Dendritic cell treated with granulocyte-macrophage colony-stimulating factor and Interleukin-4, amounts not matched to agents 40 ng/mL and 50 ng/mL, for 4 days (primary cell): ENCODE measurements at regions of chr9 and their contacts with region 1.

Region 1: DNA sequence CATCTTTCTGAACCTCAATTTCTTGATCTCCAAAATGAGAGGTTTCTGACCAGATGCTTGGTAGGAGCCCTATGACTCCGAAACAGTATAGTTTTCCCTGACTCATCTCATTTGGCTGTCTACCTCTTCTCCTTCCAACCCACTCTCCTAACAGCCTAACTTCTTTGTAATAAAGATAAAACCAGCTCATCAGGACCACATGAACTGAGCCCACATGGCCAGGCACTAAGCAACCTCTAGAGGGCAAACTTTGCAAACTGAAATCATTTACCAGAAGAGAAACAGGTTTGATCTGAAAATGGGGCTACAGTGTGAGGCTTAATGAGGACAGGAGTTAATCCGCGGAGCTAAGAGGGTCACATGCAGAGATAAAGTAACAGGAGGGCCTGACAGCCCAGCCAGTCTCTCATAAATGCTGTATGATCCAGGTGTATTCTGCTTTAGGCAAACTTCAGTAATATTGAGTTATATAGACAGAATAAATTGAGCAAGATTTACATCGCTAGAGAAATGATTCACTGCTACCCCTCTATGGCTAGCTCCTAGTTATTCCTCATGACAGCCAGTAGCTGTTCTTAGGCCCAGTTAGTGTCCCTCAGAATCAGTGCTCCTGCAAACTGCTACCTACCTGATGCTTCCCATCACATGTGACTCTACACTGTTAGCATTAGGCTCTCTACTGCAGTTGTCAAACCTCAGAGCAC is 64.6 kb downstream of the ABCA1 start:
- H3K4me3 Mint-ChIP-seq: no peak overlapping the region
- H3K27ac Mint-ChIP-seq: no peak overlapping the region
- H3K4me1 Mint-ChIP-seq: peaks cover 83% of the 10 kb centered on the region
- H3K27me3 Mint-ChIP-seq: no peaks in the 10 kb centered on the region

Region 2: GRCh38 chr9:104968025-104968982 is 105.0 kb after region 1 on chr9:
- intact Hi-C with region 1: loop called (anchors 10 kb)
- H3K4me3 Mint-ChIP-seq: peak overlapping the region; percentile 97
- H3K27ac Mint-ChIP-seq: peak overlapping the region; percentile 85
- H3K4me1 Mint-ChIP-seq: peaks cover 19% of the 10 kb centered on the region
- H3K27me3 Mint-ChIP-seq: peaks cover 6% of the 10 kb centered on the region

Region 3: DNA sequence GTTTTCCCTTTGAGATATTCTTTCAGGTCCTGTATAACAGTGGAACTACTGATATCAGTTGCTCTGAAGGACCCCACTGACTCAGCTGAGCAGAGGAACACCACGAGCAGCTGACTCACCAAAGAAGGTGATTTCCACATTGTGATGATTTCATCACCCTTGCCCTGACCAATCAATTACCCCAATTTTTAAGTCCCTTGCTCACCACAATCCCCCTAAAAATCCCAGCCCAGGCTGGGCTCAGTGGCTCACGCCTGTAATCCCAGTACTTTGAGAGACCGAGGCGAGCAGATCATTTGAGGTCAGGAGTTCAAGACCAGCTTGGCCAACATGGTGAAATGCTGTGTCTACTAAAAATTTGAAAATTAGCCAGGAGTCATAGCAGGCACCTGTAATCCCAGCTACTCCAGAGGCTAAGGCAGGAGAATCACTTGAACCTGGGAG is 189.9 kb after region 1 on chr9:
- intact Hi-C with region 1: loop called (anchors 10 kb)
- H3K4me3 Mint-ChIP-seq: no peak overlapping the region
- H3K27ac Mint-ChIP-seq: peak overlapping the region; percentile 68
- H3K4me1 Mint-ChIP-seq: peaks cover 39% of the 10 kb centered on the region
- H3K27me3 Mint-ChIP-seq: no peaks in the 10 kb centered on the region